ENCODE measurements at regions of chr10 and their contacts with region 1.

Region 1: DNA sequence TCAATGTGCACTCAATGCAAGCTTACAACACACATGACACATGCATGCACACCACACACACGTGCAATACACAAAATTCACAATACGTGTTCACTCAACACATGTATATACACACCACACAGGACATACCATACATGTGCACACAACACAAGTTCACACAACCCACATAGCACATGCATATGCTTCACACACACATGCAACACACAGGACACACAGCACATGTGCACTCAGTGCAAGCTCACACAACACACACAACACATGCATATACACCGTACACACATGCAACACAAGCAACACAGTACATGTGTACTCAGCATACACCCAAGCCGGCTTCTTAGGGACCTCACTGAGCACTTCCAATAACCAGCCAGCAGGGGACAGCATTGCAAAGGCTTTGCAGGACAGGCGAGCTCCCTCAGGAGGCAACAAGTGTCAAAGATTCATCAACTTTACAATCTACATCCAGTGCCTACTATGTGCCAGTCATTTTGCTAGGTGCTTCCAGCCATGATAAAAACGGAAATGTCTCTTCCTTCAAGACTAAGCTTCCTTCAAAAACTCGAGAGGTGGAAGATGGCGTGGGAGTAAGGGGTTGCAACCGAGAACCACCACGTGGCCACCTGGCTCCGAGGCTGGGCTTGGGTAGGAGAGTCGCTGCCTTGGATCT is 61.1 kb downstream of the JCAD start:
- DNase-seq: peak; percentile 63
- H3K27ac ChIP-seq: no peak overlapping the region
- CTCF ChIP-seq: peak; percentile 80

Region 2: GRCh38 chr10:30241422-30242110 is 243.3 kb after region 1 on chr10:
- CTCF ChIA-PET with region 1: interaction called, 12 read pairs
- POLR2A ChIA-PET with region 1: no interaction called
- DNase-seq: no peak
- H3K27ac ChIP-seq: no peak overlapping the region
- CTCF ChIP-seq: peak; percentile 14; the same call in 1 of the 2 replicates

Measured in RWPE1 (cell line).